ENCODE measurements at regions of chr2 and their contacts with region 1.

Region 1: GRCh38 chr2:177155631-177156030 is 57.0 kb upstream of the HNRNPA3 start:
- DNase-seq: no peak
- ATAC-seq: no peak
- H3K4me3 ChIP-seq: no peak overlapping the region
- H3K27ac ChIP-seq: no peak overlapping the region
- H3K4me1 ChIP-seq: no peaks in the 10 kb centered on the region
- H3K27me3 ChIP-seq: no peaks in the 10 kb centered on the region
- CTCF ChIP-seq: no peak

Region 2: GRCh38 chr2:177604271-177605065 is 448.8 kb after region 1 on chr2:
- intact Hi-C with region 1: loop called (anchors 10 kb)
- DNase-seq: no peak
- ATAC-seq: peak in 3 of 4 donors; percentile 37 to 58 (median 57)
- H3K4me3 ChIP-seq: no peak overlapping the region
- H3K27ac ChIP-seq: no peak overlapping the region
- H3K4me1 ChIP-seq: no peaks in the 10 kb centered on the region
- H3K27me3 ChIP-seq: no peaks in the 10 kb centered on the region
- CTCF ChIP-seq: peak; percentile 59